Tibial artery (tissue), 4 donors: ENCODE measurements at regions of chr15 and their contacts with region 1.

Region 1: DNA sequence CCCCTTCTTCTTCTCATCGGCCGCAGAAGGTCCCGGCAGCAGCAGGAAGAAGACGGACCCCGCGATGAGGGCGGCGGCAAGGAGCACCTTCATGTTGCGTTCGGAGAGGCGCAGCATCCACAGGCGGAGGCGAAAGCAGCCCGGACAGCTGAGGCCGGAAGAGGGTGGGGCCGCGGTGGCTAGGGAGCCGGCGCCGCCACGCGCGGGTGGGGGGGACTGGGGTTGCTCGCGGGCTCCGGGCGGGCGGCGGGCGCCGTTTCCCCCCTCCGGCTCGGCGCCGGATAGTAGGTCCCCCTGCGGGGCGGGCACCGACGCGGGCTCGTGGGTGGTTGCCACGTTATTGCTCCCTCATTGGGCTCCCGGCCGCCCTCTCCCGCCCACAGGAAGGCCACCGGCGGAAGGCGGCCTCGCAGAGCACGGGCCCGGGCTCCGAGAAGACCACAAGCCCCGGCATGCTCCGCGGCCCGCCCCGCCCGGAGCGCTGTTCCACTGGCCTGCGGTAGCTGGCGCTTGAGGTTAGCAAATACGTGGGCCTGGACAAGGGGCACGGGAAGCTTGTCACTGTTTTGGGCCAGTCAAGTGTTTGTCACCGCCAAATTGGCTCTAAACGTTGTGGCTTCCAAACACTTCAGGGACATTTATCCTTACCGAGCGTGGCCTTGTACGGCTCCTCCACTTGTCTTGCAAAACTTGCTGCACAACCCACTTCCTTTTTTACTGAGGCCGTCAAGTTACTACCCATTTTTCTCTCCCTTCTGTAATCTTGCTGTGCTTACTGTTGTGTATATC is at the start of gene PPIB:
- DNase-seq: peak; percentile 97 to 99
- H3K4me3 ChIP-seq: peak within 1 kb of the TSS; percentile 74 to 84
- H3K27ac ChIP-seq: peak within 1 kb of the TSS; percentile 84 to 85
- H3K4me1 ChIP-seq: peaks cover 0 to 43% (median 37%) of the 10 kb centered on the region in 4 donors
- H3K27me3 ChIP-seq: no peaks in the 10 kb centered on the region
- CTCF ChIP-seq: peak; percentile 5 to 26

Region 2: DNA sequence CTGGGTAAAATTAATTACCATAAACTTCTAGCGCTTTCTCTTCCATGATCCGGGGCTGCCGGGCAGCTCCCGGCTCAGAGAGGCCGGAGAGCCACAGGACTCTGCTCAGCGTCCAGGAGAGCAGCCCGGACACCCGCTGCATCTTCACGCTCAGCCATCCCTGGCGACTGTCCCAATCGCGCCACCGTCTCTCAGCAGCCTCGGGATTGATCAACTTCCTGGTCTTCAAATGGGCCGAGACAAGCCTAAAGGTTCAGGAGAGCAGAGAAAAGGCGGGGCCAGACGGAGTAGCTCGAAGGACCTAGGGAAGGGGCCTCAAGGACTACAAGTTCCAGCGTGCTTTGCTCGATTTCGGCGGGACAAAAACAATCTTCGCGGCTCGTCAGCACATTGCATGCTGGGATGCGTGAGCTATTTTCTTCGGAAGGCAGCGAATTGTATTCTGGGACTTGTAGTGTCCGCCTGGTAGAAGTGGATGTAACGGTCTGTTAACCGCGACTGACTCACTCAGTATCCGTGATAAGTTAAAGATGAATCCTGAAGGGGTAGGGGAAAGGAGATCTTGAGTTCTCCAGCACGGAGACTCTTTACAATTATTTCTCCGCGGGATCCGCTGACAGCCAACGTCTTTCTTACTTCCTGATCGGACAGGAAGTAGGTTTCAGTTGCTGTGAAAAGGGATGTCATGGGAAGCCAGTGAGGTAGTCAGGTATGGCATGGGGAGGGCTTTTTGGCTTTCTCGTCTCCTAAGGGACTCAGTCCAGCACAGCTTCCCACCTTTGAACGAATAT is 69.2 kb before region 1 on chr15 and contains the start of gene CIAO2A:
- intact Hi-C with region 1: loop called (anchors 5 kb)
- DNase-seq: peak; percentile 96 to 97
- H3K4me3 ChIP-seq: peak within 1 kb of the TSS; percentile 62 to 81
- H3K27ac ChIP-seq: peak within 1 kb of the TSS; percentile 90 to 92
- H3K4me1 ChIP-seq: peaks cover 0 to 58% (median 29%) of the 10 kb centered on the region in 4 donors
- H3K27me3 ChIP-seq: no peaks in the 10 kb centered on the region
- CTCF ChIP-seq: no peak

Region 3: DNA sequence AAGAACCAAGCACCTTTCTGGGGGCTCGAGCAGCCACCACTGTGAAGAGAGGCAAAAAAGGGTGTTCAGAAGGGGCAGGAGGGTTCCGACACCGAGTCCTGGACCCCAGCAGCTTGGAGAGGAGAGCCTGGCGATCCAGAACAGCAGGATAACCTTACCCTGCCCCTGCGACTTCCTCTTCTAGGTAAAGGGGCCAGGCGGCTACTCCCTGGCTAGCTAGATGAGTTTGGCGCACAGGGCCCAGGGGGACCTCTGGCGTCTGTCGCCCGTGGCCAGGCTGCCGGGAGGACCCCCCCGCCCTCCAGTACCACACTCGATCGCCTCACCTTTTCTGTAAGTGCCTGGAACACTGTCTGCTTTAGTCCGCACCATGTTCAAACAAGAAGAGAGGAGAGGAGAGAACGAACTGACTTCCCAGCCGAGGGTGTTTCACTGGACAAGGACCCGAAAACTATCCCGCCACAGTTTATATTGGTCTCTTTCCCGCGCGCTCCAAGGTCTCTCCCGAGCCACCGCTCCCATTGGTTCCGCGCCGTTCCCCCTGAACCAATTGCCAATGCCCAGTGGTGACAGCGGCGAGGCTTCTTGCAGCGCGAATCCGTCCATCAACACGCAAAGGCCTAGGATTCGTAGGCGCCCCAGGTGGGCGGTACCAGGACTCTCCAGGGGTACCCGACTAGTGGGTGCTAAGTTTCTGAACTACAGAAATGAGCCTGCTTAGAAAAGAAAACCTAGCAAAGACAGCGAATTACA is 218.1 kb after region 1 on chr15 and contains the start of gene PCLAF:
- intact Hi-C with region 1: loop called (anchors 5 kb)
- DNase-seq: peak; percentile 96 to 97
- H3K4me3 ChIP-seq: peak within 1 kb of the TSS; percentile 46 to 59
- H3K27ac ChIP-seq: peak within 1 kb of the TSS in 1 of 2 donors; percentile 3
- H3K4me1 ChIP-seq: peaks cover 0 to 19% (median 10%) of the 10 kb centered on the region in 4 donors
- H3K27me3 ChIP-seq: no peaks in the 10 kb centered on the region
- CTCF ChIP-seq: peak in 1 of 2 experiments; percentile 21

Region 4: DNA sequence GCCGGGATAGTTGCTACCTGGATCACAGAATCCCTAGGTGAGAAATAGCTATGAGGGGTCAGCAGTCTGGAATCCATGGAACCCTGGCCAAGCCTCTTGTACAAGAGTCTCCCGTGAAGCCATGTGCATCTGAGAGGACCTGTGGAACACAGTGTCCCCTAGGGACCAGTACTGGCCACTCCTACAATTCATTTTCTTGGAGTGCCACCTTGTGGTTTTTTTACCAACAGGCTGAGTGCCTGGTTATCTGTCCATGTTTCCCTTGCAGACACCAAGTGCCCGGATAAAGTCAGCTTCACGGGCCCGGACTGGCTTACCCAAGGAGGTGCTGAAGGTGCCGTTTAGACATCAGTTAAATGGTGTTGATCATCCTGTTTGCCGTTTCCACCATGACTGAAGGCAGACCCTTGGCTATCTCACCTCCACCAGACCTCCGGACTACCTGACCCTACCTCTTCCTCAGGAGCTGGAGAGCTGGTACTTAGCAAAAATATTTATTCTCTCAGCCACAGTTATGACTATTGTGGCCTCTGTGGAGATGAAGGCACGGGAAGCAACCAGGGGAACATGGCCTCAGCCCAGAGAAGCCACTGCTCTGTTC is 518.5 kb after region 1 on chr15:
- intact Hi-C with region 1: loop called (anchors 10 kb)
- DNase-seq: no peak
- H3K4me3 ChIP-seq: no peak overlapping the region
- H3K27ac ChIP-seq: peak overlapping the region in 1 of 2 donors; percentile 53
- H3K4me1 ChIP-seq: peaks cover 0 to 3% (median 0%) of the 10 kb centered on the region in 4 donors
- H3K27me3 ChIP-seq: no peaks in the 10 kb centered on the region
- CTCF ChIP-seq: peak; percentile 52 to 55

Region 5: DNA sequence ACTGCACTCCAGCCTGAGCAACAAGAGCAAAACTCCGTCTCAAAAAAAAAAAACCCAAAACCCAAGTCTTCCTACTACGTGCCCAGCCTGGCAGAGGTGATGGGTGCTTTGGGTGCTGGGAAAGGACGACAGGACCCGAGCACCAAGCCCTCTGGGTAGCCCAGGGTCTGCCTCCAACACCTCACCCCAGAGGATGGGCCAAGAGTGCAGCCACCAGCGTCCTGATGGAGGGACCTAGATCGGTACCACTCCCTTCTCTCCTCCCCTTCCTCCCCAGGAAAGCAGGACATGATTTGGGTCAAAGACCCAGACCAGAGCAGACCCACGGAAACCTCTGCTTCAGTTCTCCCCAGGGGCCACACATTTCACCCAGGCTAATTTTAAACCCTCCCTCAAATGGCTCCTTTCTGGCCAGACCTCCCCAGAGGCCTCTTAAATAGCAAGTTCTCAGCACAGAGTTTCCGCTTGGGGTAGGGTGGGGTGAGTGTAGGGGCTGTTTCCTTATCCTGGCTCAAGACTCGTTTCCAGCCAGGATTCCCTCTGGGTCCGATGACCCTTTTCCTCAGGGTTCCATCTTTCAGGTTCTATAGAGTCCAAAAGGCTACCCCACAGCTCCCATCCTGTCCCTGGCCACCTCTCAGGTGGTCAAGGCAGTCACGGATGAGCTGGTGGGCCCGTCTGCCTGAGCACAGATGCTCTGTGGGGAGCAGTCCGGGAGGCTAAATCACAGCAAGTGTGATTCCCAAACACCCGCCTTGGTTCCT is 591.8 kb after region 1 on chr15:
- intact Hi-C with region 1: no loop called
- DNase-seq: peak in 1 of 2 donors; percentile 82
- H3K4me3 ChIP-seq: no peak overlapping the region
- H3K27ac ChIP-seq: peak overlapping the region; percentile 83 to 96
- H3K4me1 ChIP-seq: peaks cover 0 to 100% (median 11%) of the 10 kb centered on the region in 4 donors
- H3K27me3 ChIP-seq: no peaks in the 10 kb centered on the region
- CTCF ChIP-seq: no peak

Region 6: GRCh38 chr15:65610871-65611718 is 1448.0 kb after region 1 on chr15 and contains the start of gene INTS14:
- intact Hi-C with region 1: loop called (anchors 5 kb)
- DNase-seq: peak; percentile 97 to 99
- H3K4me3 ChIP-seq: peak within 1 kb of the TSS; percentile 70 to 77
- H3K27ac ChIP-seq: peak within 1 kb of the TSS; percentile 89 to 91
- H3K4me1 ChIP-seq: peaks cover 0 to 28% (median 20%) of the 10 kb centered on the region in 4 donors
- H3K27me3 ChIP-seq: no peaks in the 10 kb centered on the region
- CTCF ChIP-seq: peak; percentile 46 to 53